IMR-90 (cell line): ENCODE measurements at regions of chr13 and their contacts with region 1.

Region 1: DNA sequence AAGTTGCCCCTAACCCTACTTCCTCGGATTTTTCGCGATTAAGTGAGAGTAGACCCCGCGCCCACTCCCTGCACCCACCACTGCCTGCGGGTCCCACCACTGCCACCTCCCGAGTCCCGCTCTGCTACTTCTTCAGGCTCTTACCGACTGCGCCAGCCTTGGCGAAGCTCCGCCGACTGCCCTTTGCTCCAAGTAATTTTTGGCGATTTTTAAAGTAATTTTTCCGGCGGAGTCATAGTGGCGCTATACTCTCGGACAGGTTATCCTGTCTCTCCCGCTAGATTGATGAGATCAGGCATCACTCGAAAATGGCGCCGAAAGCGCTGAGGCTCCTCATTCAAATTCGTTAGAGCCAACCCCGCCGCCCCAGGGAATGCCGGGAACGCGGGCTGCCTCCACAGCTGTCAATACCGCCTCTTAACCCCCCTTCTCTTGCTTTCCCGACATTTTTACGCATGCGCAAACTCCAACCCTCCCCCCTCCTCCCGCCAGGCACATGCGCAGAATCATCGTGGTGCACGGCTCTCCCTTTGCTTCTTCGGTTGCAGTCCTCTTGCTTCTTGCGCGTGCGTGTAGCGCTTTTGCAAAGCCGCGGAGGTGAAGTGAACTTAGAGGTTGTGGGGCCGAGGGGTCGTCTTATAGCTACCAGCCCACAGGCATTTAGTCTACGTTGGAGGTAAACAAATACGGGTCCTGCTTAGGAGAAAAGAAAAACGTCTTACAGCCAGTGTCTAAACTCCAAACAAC is 66.6 kb downstream of the KCNRG start:
- DNase-seq: peak; percentile 98
- ATAC-seq: peak; percentile 85
- H3K4me3 ChIP-seq: peak overlapping the region; percentile 66
- H3K27ac ChIP-seq: peak overlapping the region; percentile 95
- H3K4me1 ChIP-seq: no peaks in the 10 kb centered on the region
- H3K27me3 ChIP-seq: no peaks in the 10 kb centered on the region
- CTCF ChIP-seq: no peak; the same call in 1 of the 2 replicates
- POLR2A ChIP-seq: peak; percentile 62; the same call in 1 of the 2 replicates
- RAD21 ChIP-seq: 0 out of 2 replicates have a peak, but pooled peaks have one; percentile 5

Region 2: GRCh38 chr13:49858183-49858856 is 223.5 kb before region 1 on chr13:
- CTCF ChIA-PET with region 1: no interaction called
- POLR2A ChIA-PET with region 1: no interaction called
- dilution Hi-C with region 1: no loop called
- in situ Hi-C with region 1: no loop called
- intact Hi-C with region 1: loop called (anchors 5 kb)
- DNase-seq: peak; percentile 99
- ATAC-seq: peak; percentile 92
- H3K4me3 ChIP-seq: no peak overlapping the region
- H3K27ac ChIP-seq: peak overlapping the region; percentile 92
- H3K4me1 ChIP-seq: peaks cover 6% of the 10 kb centered on the region
- H3K27me3 ChIP-seq: no peaks in the 10 kb centered on the region
- CTCF ChIP-seq: no peak
- POLR2A ChIP-seq: no peak
- RAD21 ChIP-seq: no peak; the same call in 1 of the 2 replicates

Region 3: DNA sequence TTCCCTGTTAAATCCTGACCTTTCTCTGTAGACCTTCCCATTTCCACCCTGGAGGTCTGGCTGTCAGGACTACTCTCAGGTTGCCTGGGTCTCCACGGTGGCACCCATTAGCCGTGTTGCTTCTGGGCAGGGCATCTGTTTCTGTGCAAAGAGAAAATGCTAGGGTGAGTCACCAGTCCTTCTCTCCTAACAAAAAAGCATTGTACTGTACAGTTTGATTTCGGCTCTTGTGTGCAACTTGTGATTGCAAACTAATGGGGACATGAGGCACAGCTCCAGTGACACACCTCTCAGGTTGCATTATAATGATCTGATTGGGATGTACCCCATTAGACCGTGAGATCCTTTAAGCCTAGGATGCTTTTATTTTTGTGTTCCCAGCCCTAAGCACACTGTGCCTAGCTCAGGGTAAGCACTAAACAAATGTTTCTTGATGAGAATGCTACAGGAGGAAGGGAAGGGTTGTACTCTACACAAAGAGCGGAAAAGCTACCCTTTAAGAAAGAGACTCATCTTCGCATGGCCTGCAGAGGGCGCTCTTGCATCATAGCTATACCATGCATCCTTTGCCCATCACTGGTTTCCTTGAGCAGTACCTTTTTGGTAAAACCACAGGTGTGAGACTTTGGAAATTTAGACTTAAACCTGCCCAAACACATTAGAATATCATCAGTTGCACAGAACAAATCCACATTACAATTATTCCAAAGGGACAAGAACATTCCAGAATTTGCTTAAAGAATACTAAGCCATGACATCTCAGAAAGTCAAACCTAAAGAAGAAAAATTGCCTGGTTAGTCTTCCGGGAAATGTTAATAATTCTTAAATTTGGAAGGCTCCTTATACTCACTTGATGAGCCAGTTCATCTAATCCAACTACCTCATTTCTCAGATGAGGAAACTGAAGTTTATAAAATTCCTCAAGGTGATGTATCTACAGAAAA is 105.3 kb before region 1 on chr13:
- CTCF ChIA-PET with region 1: no interaction called
- POLR2A ChIA-PET with region 1: no interaction called
- dilution Hi-C with region 1: no loop called
- in situ Hi-C with region 1: no loop called
- intact Hi-C with region 1: loop called (anchors 5 kb)
- DNase-seq: peak; percentile 70
- ATAC-seq: peak; percentile 86
- H3K4me3 ChIP-seq: no peak overlapping the region
- H3K27ac ChIP-seq: no peak overlapping the region
- H3K4me1 ChIP-seq: peaks cover 4% of the 10 kb centered on the region
- H3K27me3 ChIP-seq: no peaks in the 10 kb centered on the region
- CTCF ChIP-seq: peak; percentile 86
- POLR2A ChIP-seq: no peak
- RAD21 ChIP-seq: peak; percentile 94

Region 4: DNA sequence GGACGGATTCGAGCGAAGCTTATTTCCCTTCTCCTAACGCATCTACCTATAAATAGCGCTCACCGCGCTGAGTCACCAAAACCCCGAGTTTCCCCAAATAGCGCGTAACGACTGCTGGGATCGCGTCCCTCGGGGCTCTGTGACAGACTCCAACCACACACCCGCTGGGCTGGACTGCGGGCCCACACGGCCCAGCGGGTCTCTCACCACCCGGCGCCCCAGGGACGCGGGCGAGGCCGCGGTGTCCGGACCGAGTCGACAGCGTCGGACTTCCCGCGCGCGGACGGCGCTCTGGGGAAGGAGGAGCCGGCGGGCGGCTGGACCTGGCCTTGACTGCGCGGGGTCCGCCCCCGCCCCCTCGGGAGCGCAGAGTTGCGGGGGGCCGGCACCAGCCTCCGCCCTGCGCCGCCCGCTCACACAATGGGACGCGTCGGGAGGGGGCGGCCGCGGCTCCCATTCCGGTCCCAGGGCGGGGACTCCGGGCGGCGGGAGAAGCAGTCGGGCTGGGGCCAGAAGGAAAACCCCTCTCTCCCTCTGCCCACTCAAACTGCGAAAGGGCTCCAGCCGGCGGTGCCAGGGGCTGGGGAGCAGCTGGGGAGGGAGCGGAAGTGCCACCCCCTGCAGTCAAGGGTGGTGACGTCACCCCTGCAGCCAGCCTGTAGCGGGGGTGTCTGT is 42.1 kb after region 1 on chr13:
- CTCF ChIA-PET with region 1: no interaction called
- POLR2A ChIA-PET with region 1: no interaction called
- dilution Hi-C with region 1: no loop called
- in situ Hi-C with region 1: no loop called
- intact Hi-C with region 1: loop called (anchors 1 kb)
- DNase-seq: peak; percentile 97
- ATAC-seq: peak; percentile 72
- H3K4me3 ChIP-seq: peak overlapping the region; percentile 76
- H3K27ac ChIP-seq: peak overlapping the region; percentile 95
- H3K4me1 ChIP-seq: peaks cover 7% of the 10 kb centered on the region
- H3K27me3 ChIP-seq: no peaks in the 10 kb centered on the region
- CTCF ChIP-seq: 0 out of 2 replicates have a peak, but pooled peaks have one; percentile 13
- POLR2A ChIP-seq: peak; percentile 94
- RAD21 ChIP-seq: no peak; the same call in 1 of the 2 replicates

Region 5: DNA sequence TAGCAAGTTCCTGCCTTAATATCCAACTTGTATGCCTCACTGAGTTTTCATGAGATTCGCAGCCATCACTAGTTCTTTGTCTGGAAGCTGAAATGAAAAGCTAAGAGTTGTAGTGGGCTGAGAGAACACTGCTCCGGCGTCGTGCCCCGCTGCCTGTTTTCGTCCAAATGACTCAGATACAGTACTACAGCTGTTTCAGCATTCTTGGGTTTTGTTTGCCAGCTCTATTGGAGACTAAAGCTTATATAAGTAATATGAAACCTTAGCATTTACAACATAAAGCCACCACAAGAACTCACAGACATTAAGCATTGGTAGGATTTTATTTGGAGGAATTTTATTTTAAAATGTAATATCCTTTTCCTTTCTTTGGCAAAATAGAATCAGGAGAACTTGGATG is 461.9 kb after region 1 on chr13:
- CTCF ChIA-PET with region 1: interaction called, 3 read pairs
- POLR2A ChIA-PET with region 1: no interaction called
- dilution Hi-C with region 1: no loop called
- in situ Hi-C with region 1: loop called (anchors 5 kb)
- intact Hi-C with region 1: no loop called
- DNase-seq: peak; percentile 91
- ATAC-seq: peak; percentile 99
- H3K4me3 ChIP-seq: no peak overlapping the region
- H3K27ac ChIP-seq: no peak overlapping the region; the same call in 1 of the 2 replicates
- H3K4me1 ChIP-seq: no peaks in the 10 kb centered on the region; the same call in 1 of the 2 replicates
- H3K27me3 ChIP-seq: no peaks in the 10 kb centered on the region; the same call in 1 of the 2 replicates
- CTCF ChIP-seq: no peak
- POLR2A ChIP-seq: no peak
- RAD21 ChIP-seq: no peak

Region 6: GRCh38 chr13:51070005-51070649 is 988.3 kb after region 1 on chr13:
- CTCF ChIA-PET with region 1: no interaction called
- POLR2A ChIA-PET with region 1: no interaction called
- dilution Hi-C with region 1: no loop called
- in situ Hi-C with region 1: no loop called
- intact Hi-C with region 1: loop called (anchors 5 kb)
- DNase-seq: peak; percentile 72
- ATAC-seq: peak; percentile 95
- H3K4me3 ChIP-seq: no peak overlapping the region
- H3K27ac ChIP-seq: no peak overlapping the region
- H3K4me1 ChIP-seq: peaks cover 1% of the 10 kb centered on the region; the same call in 1 of the 2 replicates
- H3K27me3 ChIP-seq: peaks cover 27% of the 10 kb centered on the region
- CTCF ChIP-seq: peak; percentile 93
- POLR2A ChIP-seq: peak; percentile 54; the same call in 1 of the 2 replicates
- RAD21 ChIP-seq: peak; percentile 98